Activated CD4-positive, alpha-beta T cell treated with anti-CD3 and anti-CD28 coated beads, Interleukin-2, amount 10 ng/mL, durations not matched to agents 24 days and 14 days (primary cell): ENCODE measurements at regions of chr12 and their contacts with region 1.

Region 1: DNA sequence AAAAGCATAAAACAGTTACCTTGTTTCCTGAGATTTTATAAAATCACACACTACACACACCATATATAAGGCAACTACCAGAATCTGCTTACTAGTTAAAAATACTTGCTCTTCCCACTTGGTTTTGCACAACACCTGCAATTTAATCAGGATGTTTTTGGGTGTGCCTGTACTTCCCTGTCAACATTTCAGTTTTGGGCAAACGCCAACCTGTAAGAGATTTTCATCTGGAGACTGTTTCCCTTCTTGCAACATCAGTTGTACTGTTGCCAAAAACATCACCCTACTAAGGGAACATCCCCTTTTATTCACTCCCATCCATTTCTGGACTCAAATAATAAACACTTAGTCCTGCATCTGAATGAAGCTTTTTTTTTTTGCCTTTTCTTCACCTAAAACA is 172.3 kb downstream of the DUSP6 start:
- DNase-seq: no peak
- H3K4me3 Mint-ChIP-seq: peak overlapping the region; percentile 38
- H3K27ac Mint-ChIP-seq: peak overlapping the region; percentile 81
- H3K4me1 Mint-ChIP-seq: peaks cover 51% of the 10 kb centered on the region
- H3K27me3 Mint-ChIP-seq: no peaks in the 10 kb centered on the region

Region 2: DNA sequence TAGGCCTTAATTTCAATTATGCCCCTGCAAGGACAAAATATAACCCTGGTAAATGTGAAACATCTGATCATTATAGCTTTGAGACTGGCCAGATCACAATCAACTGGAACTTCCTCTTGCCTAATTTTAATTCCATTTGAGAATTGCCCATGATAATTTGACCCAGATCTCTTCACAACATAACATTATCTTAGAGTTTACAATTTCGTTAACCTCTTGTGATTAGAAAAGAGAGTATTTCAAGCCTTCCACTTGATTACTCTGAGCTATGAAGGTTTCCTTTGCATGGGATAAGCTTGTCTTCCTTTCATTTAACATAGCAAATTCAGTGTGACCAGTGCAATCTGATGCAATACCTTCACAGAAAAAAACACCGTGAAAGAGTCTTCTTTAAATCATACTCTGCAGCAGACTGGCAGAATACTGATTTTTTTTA is 28.7 kb after region 1 on chr12:
- intact Hi-C with region 1: no loop called
- DNase-seq: no peak
- H3K4me3 Mint-ChIP-seq: no peak overlapping the region
- H3K27ac Mint-ChIP-seq: no peak overlapping the region
- H3K4me1 Mint-ChIP-seq: peaks cover 23% of the 10 kb centered on the region
- H3K27me3 Mint-ChIP-seq: no peaks in the 10 kb centered on the region

Region 3: GRCh38 chr12:89252284-89252683 is 72.3 kb after region 1 on chr12:
- intact Hi-C with region 1: loop called (anchors 2 kb)
- DNase-seq: no peak
- H3K4me3 Mint-ChIP-seq: no peak overlapping the region
- H3K27ac Mint-ChIP-seq: peak overlapping the region; percentile 83
- H3K4me1 Mint-ChIP-seq: peaks cover 32% of the 10 kb centered on the region
- H3K27me3 Mint-ChIP-seq: no peaks in the 10 kb centered on the region

Region 4: GRCh38 chr12:89421092-89421835 is 241.3 kb after region 1 on chr12:
- intact Hi-C with region 1: no loop called
- DNase-seq: no peak
- H3K4me3 Mint-ChIP-seq: no peak overlapping the region
- H3K27ac Mint-ChIP-seq: no peak overlapping the region
- H3K4me1 Mint-ChIP-seq: peaks cover 9% of the 10 kb centered on the region
- H3K27me3 Mint-ChIP-seq: no peaks in the 10 kb centered on the region